Dorsolateral prefrontal cortex (tissue), 120 donors: ENCODE measurements at regions of chr17 and their contacts with region 1.

Region 1: GRCh38 chr17:41992576-41992975 is 24.7 kb downstream of the DNAJC7 start:
- DNase-seq: peak in 8 of 10 donors; percentile 37 to 88 (median 76)
- H3K4me3 ChIP-seq: peak overlapping the region in 11 of 59 donors; percentile 4 to 26 (median 18)
- H3K27ac ChIP-seq: peak overlapping the region; percentile 31 to 100 (median 91)
- H3K27me3 ChIP-seq: no peaks in the 10 kb centered on the region
- CTCF ChIP-seq: no peak

Region 2: DNA sequence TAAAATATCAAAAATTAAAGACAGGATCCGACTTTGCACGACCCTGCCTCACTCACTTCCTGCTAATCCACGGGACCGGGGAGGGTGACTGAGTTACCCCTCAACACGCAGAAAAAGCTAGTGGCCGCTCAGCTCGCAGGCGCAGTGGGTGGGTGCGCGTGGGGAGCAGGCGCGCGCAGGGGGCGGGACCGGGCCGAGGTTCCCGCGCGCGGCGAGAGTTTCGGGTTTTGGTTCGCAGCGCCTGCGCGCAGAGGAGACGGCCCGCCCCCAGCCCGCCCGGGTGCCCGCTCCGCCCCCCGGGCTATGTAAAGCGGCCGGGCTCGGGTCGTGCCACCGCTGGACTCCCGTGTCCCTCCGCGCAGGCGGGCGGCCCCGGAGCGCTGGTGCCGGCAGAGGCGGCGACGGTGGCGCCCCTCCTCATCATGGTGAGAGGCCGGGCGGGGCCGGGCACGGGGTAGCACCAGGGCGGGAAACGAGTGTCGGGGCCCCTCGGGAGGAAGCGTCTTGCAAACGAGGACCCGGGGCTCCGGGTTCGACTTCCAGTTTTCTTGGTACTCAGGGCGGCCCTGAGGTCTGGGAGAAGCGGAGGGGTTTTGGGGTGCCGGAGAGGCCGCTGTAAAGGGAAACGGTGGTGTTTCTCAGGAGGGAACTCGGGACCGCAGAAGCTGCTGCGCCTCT is 26.0 kb before region 1 on chr17 and contains the start of gene CNP:
- intact Hi-C with region 1: loop called in 1 of 2 experiments (anchors 1 kb)
- DNase-seq: peak; percentile 87 to 93 (median 90)
- H3K4me3 ChIP-seq: peak within 1 kb of the TSS; percentile 58 to 99 (median 96)
- H3K27ac ChIP-seq: peak within 1 kb of the TSS; percentile 93 to 100 (median 98)
- H3K27me3 ChIP-seq: no peaks in the 10 kb centered on the region
- CTCF ChIP-seq: peak in 35 of 56 donors; percentile 1 to 56 (median 31)
- total RNA-seq, gene CNP: 166 to 3,303 (median 637) TPM

Region 3: DNA sequence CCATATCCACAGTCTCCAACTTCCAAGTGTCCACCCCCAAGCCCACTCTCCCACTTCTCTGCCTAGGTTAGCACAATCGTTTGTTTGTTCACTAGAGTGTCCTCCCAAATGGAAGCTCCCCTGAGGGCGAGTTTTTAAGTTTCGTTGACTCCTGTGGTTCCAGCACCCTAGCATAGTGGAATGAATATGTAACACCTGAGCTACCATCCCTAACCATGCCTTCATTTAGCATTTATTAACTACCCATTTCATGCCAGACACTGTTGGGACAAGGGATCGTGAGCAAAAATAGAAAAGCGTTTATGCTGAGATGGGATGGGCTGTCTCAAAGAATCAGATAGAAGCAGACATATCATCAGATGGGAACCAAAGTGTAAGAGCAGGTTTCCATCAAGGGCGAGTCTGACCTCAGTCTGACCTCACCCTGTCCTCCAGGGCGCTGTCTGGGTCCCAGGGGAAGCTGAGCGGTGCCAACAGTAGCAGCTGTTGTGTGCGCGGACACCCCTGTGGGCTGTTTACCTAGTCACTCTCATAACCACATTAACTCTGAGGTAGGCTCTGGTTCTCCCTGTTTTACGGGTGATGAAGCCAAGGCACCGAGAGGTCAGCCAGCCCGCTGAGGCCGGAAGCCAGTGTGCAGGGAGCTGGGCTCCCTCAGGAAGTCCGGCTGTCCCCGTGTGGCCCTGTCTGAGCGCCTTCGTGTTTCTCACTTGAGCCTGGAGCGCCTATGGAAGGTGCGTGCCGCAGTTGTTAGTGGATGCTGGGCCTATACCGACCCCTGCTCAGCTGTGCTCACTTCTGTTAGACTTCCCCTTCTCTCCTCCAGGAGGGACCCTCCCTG is 19.8 kb before region 1 on chr17:
- intact Hi-C with region 1: loop called (anchors 1 to 2 kb)
- DNase-seq: peak in 1 of 10 donors; percentile 46
- H3K4me3 ChIP-seq: peak overlapping the region; percentile 20 to 99 (median 96)
- H3K27ac ChIP-seq: peak overlapping the region; percentile 50 to 100 (median 98)
- H3K27me3 ChIP-seq: no peaks in the 10 kb centered on the region
- CTCF ChIP-seq: no peak

Region 4: GRCh38 chr17:42002792-42003301 is 10.3 kb after region 1 on chr17:
- intact Hi-C with region 1: loop called in 1 of 2 experiments (anchors 1 kb)
- DNase-seq: peak in 1 of 10 donors; percentile 33
- H3K4me3 ChIP-seq: peak overlapping the region in 7 of 59 donors; percentile 4 to 28 (median 17)
- H3K27ac ChIP-seq: peak overlapping the region; percentile 43 to 100 (median 87)
- H3K27me3 ChIP-seq: no peaks in the 10 kb centered on the region
- CTCF ChIP-seq: peak in 1 of 56 donors; percentile 13

Region 5: GRCh38 chr17:42067351-42068091 is 74.9 kb after region 1 on chr17:
- intact Hi-C with region 1: no loop called
- DNase-seq: peak in 9 of 10 donors; percentile 40 to 70 (median 57)
- H3K4me3 ChIP-seq: no peak overlapping the region
- H3K27ac ChIP-seq: no peak overlapping the region
- H3K27me3 ChIP-seq: peaks cover 0 to 41% (median 20%) of the 10 kb centered on the region in 45 donors
- CTCF ChIP-seq: peak; percentile 63 to 98 (median 89)